Sciatic nerve (tissue), 2 donors: ENCODE measurements at regions of chr2 and their contacts with region 1.

Region 1: DNA sequence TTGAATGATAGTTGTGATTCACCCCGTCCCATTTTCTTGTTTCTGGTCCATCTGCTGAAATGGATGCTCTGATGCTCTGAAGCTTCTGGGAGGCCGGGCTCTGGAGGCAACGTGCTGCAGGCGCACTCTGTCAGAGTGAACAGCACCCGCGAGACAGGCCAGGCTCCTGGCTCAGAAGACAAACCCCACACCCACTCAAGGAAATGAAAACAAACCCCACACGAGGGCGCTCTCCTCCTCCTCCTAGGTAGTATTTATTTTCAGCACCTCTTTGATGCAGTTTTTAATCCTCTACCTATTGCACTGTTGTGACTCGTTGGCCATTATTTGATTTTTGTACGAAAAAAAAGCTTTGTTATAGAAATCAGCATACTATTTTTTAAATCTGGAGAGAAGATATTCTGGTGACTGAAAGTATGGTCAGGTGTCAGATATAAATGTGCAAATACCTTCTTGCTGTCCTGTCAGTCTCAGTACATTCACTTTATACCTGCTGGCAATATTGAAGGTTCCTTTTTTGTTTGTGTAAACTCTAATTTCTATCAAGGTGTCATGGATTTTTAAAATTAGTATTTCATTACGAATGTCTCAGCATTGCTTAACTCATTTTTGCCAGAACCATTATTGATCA is 10.3 kb upstream of the CHST10 start:
- DNase-seq: peak; percentile 74
- ATAC-seq: peak; percentile 55

Region 2: DNA sequence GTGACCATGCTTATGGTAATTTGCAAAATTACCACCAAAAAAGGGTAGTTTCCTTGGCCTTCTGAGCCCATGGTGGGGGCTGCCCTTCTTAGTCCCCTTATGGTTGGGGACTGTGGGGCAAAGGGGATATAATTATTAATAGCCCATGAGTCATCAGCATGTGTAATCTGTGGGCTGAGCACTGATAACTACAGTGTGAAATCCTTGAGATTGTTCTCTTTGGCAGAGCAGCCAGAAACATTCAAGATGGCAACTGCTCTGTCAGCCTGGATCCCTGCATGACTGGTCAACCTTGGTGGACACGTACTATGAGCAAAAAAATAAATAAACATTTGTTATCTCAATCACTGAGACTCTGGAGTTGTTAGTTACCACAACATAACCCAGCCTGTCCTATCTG is 1758.1 kb before region 1 on chr2:
- intact Hi-C with region 1: loop called (anchors 5 kb)
- DNase-seq: no peak
- ATAC-seq: no peak

Region 3: DNA sequence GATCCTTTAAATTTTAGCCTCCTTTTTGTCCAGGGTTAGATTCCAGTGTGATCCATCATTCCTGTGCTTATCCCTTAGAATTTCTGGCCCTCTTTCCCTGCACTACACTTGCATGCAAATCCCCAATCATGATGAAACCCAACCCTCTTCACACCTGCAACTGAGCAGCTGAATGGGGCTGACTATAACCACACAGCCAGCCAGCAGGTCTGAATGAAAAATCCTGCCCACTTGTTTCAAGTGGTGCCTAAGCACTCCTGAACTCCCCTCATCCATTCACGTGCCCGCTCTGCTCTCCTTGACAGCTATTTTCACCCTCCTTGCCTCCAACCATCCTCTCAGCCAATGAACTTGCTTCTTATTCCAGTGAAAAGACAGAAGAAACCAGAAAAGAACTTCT is 204.9 kb before region 1 on chr2:
- intact Hi-C with region 1: no loop called
- DNase-seq: no peak
- ATAC-seq: no peak

Region 4: GRCh38 chr2:100291120-100291970 is 136.4 kb before region 1 on chr2:
- intact Hi-C with region 1: no loop called
- DNase-seq: no peak
- ATAC-seq: peak; percentile 89

Region 5: DNA sequence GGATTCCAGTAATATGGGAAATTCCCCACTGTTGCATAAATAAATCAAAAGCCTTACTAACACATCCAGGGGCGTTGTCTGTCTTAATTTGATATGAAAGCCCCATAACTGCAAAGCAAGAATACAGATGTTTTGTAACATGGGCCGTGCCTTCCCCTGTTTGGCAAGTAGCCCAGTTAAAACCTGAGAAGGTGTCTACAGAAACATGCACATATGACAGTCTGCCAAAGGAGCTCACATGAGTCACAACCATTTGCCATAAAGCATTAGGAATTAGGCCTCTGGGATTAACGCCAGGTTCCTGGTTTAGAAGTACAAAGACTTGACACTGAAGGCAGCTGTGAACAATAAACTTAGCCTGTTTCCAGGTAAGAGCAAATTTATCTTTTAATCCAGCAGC is 62.3 kb before region 1 on chr2:
- intact Hi-C with region 1: no loop called
- DNase-seq: no peak
- ATAC-seq: no peak

Region 6: DNA sequence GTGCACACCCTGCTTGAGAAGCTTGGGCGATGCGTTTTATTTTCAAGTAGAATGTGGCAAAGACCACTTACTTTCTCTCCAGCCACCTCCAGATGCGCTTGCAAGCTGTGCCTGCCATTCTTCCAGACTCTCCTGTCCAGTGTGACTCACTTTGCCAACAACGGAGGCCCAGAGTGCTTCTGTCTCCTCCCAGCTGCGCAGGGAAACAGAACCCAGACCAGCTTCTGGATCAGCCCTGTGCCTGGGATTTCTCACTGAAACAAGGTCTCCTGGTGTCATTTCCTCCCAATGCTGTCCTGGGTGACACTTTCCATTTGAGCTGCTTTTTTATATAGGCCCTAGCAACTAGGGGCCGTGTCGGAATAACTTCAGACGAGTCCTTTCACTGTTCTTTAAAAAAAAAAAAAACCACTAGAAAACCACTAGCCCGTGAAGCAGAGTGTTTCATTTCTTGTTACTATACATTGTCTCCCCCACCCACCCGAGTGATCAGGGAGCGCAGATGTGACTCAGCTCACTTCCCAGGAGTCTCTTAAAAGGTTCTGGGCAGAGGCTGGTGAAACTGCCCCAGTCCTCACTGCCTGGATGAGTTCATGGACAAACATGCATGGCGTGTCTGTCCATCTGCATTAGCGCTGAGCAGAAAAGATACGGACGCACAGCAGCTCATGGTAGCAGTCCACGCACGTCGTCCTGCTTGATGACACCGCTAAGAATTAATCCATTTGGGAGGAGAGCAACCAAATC is 549.1 kb after region 1 on chr2:
- intact Hi-C with region 1: loop called (anchors 10 kb)
- DNase-seq: peak; percentile 31
- ATAC-seq: no peak